Cardiac septum (tissue), 1 donor: ENCODE measurements at regions of chr21 and their contacts with region 1.

Region 1: GRCh38 chr21:40120940-40121575 is 253.8 kb downstream of the PCP4 start:
- DNase-seq: no peak

Region 2: GRCh38 chr21:39788383-39788782 is 332.7 kb before region 1 on chr21:
- intact Hi-C with region 1: loop called (anchors 1 kb)
- DNase-seq: peak; percentile 84

Region 3: DNA sequence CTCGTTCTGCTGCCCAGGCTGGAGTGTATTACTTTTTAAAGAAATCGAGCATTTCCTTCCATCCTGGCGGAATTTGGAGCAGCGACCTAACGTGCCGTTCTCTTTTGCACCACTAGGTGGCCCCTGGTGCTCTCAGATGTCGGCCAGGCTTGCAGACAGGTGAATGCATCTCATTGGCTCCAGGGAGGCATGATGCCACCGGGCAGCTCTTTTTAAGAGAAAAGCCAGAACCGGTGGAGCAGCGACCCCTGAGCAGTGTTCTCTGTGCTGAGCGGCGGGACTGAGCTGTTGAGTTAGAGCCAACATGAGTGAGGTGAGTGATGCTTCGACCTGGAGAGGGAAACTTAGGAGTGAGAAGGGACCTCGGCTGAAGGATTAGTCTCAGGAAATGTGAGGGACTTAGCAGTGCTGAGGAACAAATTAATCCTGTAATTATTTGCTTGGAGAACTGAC is 253.8 kb before region 1 on chr21 and contains the start of gene PCP4:
- intact Hi-C with region 1: loop called (anchors 5 kb)
- DNase-seq: no peak
- total RNA-seq, gene PCP4: 1.5 TPM